GM12878 (cell line): ENCODE measurements at regions of chr2 and their contacts with region 1.

Region 1: DNA sequence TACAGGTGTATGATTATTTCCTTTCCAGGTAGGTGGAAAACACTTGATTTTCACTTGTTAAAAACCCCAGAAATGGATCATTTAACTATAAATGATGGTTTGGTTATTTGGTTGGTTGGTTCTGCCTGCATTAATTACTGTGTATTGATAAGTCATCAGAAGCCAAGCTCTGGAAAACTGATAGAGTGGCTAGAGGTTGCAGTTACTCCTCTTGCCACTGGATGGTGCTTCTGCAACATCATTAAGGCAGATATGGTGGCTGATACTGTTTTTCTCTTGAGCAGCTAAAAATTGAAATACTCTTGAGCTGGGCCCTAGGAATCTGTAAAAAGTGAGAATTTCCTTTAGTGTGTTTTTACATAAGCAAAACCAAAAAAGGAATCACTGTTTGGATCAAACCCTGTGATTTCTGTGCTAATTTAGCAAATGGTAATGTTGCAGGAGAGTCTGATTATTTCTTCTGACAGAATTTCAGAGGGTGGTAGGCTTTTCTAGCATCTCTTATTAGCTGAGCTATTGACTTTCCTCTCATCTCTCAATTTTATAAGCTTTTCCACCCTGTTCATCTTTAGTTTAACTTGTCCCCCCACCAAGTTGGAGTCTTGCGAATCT is 54.3 kb downstream of the RAB10 start:
- DNase-seq: no peak
- ATAC-seq: peak; percentile 82
- H3K4me3 ChIP-seq: no peak overlapping the region
- H3K27ac ChIP-seq: no peak overlapping the region
- H3K4me1 ChIP-seq: peaks cover 3% of the 10 kb centered on the region; the same call in 1 of the 2 replicates
- H3K27me3 ChIP-seq: no peaks in the 10 kb centered on the region
- CTCF ChIP-seq: peak; percentile 65 to 77 (median 74)
- EP300 ChIP-seq: no peak
- POLR2A ChIP-seq: no peak
- RAD21 ChIP-seq: peak; percentile 59

Region 2: GRCh38 chr2:25991965-25992364 is 96.2 kb before region 1 on chr2:
- CTCF ChIA-PET with region 1: interaction called, 11 read pairs
- POLR2A ChIA-PET with region 1: no interaction called
- RAD21 ChIA-PET with region 1: interaction called, 7 read pairs
- SMC1A ChIA-PET with region 1: interaction called, 17 read pairs
- in situ Hi-C with region 1: no loop called
- intact Hi-C with region 1: loop called (anchors 10 kb)
- DNase-seq: no peak
- ATAC-seq: peak; percentile 50
- H3K4me3 ChIP-seq: no peak overlapping the region
- H3K27ac ChIP-seq: no peak overlapping the region
- H3K4me1 ChIP-seq: no peaks in the 10 kb centered on the region
- H3K27me3 ChIP-seq: no peaks in the 10 kb centered on the region
- CTCF ChIP-seq: no peak
- EP300 ChIP-seq: no peak
- POLR2A ChIP-seq: no peak
- RAD21 ChIP-seq: no peak

Region 3: GRCh38 chr2:26033818-26034636 is 54.1 kb before region 1 on chr2 and contains the start of gene RAB10:
- CTCF ChIA-PET with region 1: interaction called, 10 read pairs
- POLR2A ChIA-PET with region 1: interaction called, 3 read pairs
- RAD21 ChIA-PET with region 1: interaction called, 3 read pairs
- SMC1A ChIA-PET with region 1: interaction called, 6 read pairs
- in situ Hi-C with region 1: no loop called
- intact Hi-C with region 1: no loop called
- DNase-seq: peak; percentile 98
- ATAC-seq: peak; percentile 89
- H3K4me3 ChIP-seq: peak within 1 kb of the TSS; percentile 98
- H3K27ac ChIP-seq: peak within 1 kb of the TSS; percentile 95
- H3K4me1 ChIP-seq: peaks cover 3% of the 10 kb centered on the region; the same call in 1 of the 2 replicates
- H3K27me3 ChIP-seq: no peaks in the 10 kb centered on the region
- CTCF ChIP-seq: no peak
- EP300 ChIP-seq: no peak
- POLR2A ChIP-seq: peak; percentile 98
- RAD21 ChIP-seq: no peak
- polyA plus RNA-seq, gene RAB10: 13.3 to 24.8 TPM

Region 4: DNA sequence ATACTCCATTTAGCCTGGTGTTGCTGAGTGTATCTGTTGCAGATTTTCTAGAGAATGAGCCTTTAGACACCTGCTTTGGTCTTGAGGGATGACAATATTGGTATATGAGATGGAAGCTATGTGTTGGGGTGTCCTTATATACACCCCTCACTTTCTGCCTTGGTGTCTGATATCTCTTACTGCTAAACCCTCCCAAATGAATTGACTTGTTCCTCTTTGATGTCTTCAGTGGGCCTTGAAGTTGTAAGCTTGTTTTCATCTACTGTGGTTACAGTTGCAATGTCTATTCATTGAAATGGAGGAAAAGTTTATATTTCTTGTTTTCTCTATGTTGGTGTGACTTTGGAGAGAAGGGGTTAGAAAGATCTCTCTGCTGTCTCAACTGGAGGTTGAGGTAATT is 35.4 kb before region 1 on chr2:
- CTCF ChIA-PET with region 1: interaction called, 10 read pairs
- POLR2A ChIA-PET with region 1: no interaction called
- RAD21 ChIA-PET with region 1: no interaction called
- SMC1A ChIA-PET with region 1: interaction called, 3 read pairs
- in situ Hi-C with region 1: no loop called
- intact Hi-C with region 1: no loop called
- DNase-seq: no peak
- ATAC-seq: peak; percentile 38; the same call in 2 of the 3 replicates
- H3K4me3 ChIP-seq: no peak overlapping the region
- H3K27ac ChIP-seq: no peak overlapping the region
- H3K4me1 ChIP-seq: no peaks in the 10 kb centered on the region; the same call in 1 of the 2 replicates
- H3K27me3 ChIP-seq: no peaks in the 10 kb centered on the region
- CTCF ChIP-seq: no peak
- EP300 ChIP-seq: no peak
- POLR2A ChIP-seq: no peak
- RAD21 ChIP-seq: no peak

Region 5: GRCh38 chr2:26075963-26076605 is 12.1 kb before region 1 on chr2:
- CTCF ChIA-PET with region 1: interaction called, 10 read pairs
- POLR2A ChIA-PET with region 1: interaction called, 3 read pairs
- RAD21 ChIA-PET with region 1: no interaction called
- SMC1A ChIA-PET with region 1: interaction called, 6 read pairs
- in situ Hi-C with region 1: no loop called
- intact Hi-C with region 1: no loop called
- DNase-seq: no peak
- ATAC-seq: no peak
- H3K4me3 ChIP-seq: no peak overlapping the region
- H3K27ac ChIP-seq: no peak overlapping the region
- H3K4me1 ChIP-seq: no peaks in the 10 kb centered on the region
- H3K27me3 ChIP-seq: no peaks in the 10 kb centered on the region
- CTCF ChIP-seq: no peak
- EP300 ChIP-seq: no peak
- POLR2A ChIP-seq: no peak
- RAD21 ChIP-seq: no peak

Region 6: GRCh38 chr2:26144953-26145680 is 57.0 kb after region 1 on chr2:
- CTCF ChIA-PET with region 1: interaction called, 24 read pairs
- POLR2A ChIA-PET with region 1: interaction called, 4 read pairs
- RAD21 ChIA-PET with region 1: interaction called, 4 read pairs
- SMC1A ChIA-PET with region 1: interaction called, 3 read pairs
- in situ Hi-C with region 1: no loop called
- intact Hi-C with region 1: loop called (anchors 5 kb)
- DNase-seq: peak; percentile 23
- ATAC-seq: peak; percentile 87
- H3K4me3 ChIP-seq: no peak overlapping the region
- H3K27ac ChIP-seq: no peak overlapping the region
- H3K4me1 ChIP-seq: no peaks in the 10 kb centered on the region
- H3K27me3 ChIP-seq: no peaks in the 10 kb centered on the region
- CTCF ChIP-seq: peak; percentile 66 to 86 (median 79)
- EP300 ChIP-seq: no peak
- POLR2A ChIP-seq: no peak
- RAD21 ChIP-seq: peak; percentile 95

Region 7: DNA sequence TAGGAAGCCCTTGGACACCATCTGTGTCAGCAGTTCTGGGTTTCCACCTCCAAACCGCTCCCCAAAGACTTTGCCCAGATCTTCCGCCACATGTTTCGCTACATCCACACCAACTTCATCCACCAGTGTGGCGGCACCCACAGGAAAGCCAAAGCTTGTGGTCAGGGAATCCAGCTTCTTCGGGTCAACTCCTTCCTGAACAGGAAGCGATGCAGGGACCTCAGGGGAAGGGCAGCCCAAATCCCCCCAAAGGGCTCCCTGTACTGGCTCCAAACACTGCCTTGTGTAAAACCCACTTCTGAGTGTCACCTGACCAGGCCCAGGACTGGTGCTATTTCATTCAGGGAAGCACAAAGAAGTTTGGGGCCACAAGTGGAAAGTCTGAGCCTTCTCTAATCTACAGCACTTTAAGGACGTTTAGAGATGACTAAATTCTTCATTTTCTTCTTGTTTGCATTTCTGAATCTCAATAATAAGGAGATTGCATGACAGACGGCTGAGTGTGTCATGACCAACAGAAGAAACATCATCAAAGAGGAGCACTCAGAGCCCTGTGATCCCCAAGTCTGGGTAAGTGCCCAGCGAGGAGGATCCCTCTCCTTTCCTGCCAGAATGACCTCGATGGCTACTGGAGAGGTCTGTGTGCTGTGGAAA is 105.6 kb after region 1 on chr2:
- CTCF ChIA-PET with region 1: no interaction called
- POLR2A ChIA-PET with region 1: no interaction called
- RAD21 ChIA-PET with region 1: no interaction called
- SMC1A ChIA-PET with region 1: no interaction called
- in situ Hi-C with region 1: no loop called
- intact Hi-C with region 1: no loop called
- DNase-seq: no peak
- ATAC-seq: no peak
- H3K4me3 ChIP-seq: no peak overlapping the region
- H3K27ac ChIP-seq: no peak overlapping the region
- H3K4me1 ChIP-seq: peaks cover 7% of the 10 kb centered on the region; the same call in 1 of the 2 replicates
- H3K27me3 ChIP-seq: no peaks in the 10 kb centered on the region
- CTCF ChIP-seq: no peak
- EP300 ChIP-seq: no peak
- POLR2A ChIP-seq: no peak
- RAD21 ChIP-seq: no peak